ENCODE measurements at regions of chr5 and their contacts with region 1.

Region 1: GRCh38 chr5:150161242-150162141 is 5.1 kb upstream of the CDX1 start:
- DNase-seq: peak; percentile 87 to 90
- H3K4me3 ChIP-seq: no peak overlapping the region
- H3K27ac ChIP-seq: peak overlapping the region in 3 of 5 donors; percentile 66 to 84 (median 81)
- H3K4me1 ChIP-seq: peaks cover under 1 to 27% (median 15%) of the 10 kb centered on the region in 4 donors
- H3K27me3 ChIP-seq: peaks cover 0 to 10% (median 3%) of the 10 kb centered on the region in 3 donors
- CTCF ChIP-seq: peak in 6 of 7 experiments; percentile 69 to 96 (median 94)
- EP300 ChIP-seq: no peak
- POLR2A ChIP-seq: no peak

Region 2: DNA sequence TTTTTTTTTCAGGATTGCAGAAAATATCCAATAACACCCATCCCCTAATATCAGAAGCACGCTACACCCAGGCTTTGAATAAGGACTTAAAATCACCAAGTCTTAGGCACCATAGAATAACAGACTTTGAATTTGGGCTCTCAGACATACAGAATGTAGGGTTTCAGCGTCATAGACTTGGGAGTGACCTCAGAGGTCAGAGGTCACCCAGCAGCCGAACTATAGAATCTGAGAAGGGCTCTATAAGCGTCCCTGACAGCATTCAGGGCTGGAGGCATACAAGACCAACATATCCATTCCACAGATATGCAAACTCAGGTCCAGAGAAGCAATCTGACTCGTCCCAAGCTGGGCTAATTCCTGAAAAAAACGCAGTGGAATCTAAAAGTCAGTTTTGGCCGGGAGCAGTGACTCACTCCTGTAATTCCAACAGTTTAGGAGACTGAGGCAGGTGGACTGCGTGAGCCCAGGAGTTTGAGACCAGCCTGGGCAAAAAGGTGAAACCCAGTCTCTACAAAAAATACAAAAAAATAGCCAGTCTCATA is 63.1 kb after region 1 on chr5:
- intact Hi-C with region 1: loop called (anchors 5 kb)
- DNase-seq: no peak
- H3K4me3 ChIP-seq: no peak overlapping the region
- H3K27ac ChIP-seq: no peak overlapping the region
- H3K4me1 ChIP-seq: no peaks in the 10 kb centered on the region
- H3K27me3 ChIP-seq: peaks cover 0 to 9% (median 0%) of the 10 kb centered on the region in 3 donors
- CTCF ChIP-seq: no peak
- EP300 ChIP-seq: no peak
- POLR2A ChIP-seq: no peak

Region 3: DNA sequence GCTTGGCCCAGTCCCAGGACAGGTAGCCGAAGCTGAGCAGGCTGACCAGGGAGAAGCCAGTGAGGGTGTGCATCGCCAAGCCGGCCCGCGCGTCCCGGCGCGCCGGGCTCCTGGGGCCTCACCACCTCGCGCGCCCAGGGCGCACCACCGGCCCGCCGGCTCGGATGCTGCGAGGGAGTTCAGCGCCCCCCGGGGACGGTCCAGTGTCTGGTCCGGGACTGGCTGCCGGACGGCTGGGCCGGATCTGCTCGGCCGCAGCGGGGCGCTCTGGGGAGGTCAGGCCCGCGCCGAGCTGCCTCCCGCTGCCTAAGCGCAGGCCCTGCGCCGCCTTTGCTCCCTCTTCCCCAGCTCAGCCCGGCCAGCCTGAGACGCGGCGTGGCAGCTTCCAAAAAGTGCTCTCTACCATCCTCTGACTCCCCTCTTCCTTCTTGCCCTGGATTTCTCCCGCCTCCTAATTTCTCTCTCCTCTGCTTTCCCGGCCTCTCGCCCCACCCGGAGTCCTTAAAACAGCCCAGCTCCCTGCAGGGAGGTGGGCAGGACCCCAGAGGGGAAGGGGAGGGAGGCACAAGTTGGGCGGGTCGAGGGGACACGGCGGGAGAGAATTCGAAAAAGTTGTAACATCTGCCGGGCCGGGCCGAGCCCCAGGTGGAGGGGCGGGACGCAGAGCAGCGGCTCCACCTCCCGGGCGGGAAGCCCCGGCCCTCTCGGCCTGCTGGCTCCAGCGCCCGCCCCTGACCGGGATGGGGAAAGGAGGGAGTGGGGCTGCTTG is 141.0 kb after region 1 on chr5 and contains the start of gene ARSI:
- intact Hi-C with region 1: no loop called
- DNase-seq: peak in 1 of 2 donors; percentile 91
- H3K4me3 ChIP-seq: peak within 1 kb of the TSS; percentile 39 to 40 (median 40)
- H3K27ac ChIP-seq: peak within 1 kb of the TSS; percentile 28 to 80 (median 60)
- H3K4me1 ChIP-seq: peaks cover 14 to 72% (median 28%) of the 10 kb centered on the region in 4 donors
- H3K27me3 ChIP-seq: peaks cover 0 to 40% (median 17%) of the 10 kb centered on the region in 3 donors
- CTCF ChIP-seq: no peak
- EP300 ChIP-seq: no peak
- POLR2A ChIP-seq: no peak
- total RNA-seq, gene ARSI: 1.7 to 7.0 (median 2.3) TPM in 3 of 5 donors, not detected in the others

Region 4: DNA sequence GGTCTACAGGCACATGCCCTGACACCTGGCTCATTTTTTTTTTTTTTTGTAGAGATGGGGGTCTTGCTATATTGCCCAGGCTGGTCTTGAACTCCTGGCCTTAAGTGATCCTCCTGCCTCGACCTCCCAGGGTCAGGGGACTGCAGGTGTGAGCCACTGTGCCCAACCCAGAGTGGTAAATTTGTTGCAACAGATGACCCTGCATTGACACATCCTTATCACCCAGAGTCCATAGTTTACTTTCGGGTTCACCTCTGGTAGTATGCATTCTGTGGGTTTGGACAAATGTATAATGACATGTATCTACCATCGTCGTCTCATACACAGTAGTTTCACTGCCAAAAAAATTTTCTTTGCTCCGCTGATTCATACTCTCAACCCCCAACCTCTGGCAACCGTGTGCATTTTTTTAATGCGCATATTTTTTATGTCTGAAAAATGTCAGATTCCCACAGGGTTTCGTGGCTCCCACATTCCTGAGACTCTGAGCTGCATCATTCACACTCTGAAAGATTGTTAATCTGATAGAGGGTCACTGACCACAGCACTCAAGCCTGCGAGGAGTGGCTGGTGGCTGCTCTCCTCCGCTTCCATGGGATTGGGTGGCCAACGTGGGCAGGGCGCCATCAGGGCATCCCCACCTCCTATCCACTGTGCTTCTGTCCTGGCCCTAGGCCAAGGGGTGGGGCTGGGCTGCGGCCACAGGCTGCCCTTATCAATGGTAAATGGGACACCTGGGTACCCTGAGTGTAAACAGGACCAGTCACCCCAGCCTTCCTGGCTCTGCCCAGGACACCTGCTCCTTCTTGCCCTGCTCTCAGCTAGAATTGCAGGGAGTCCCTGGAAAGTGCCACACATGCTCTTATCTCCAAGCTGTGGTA is 356.0 kb after region 1 on chr5:
- intact Hi-C with region 1: no loop called
- DNase-seq: peak; percentile 83 to 86
- H3K4me3 ChIP-seq: no peak overlapping the region
- H3K27ac ChIP-seq: peak overlapping the region; percentile 61 to 87 (median 82)
- H3K4me1 ChIP-seq: peaks cover 71 to 97% (median 84%) of the 10 kb centered on the region in 4 donors
- H3K27me3 ChIP-seq: no peaks in the 10 kb centered on the region
- CTCF ChIP-seq: no peak
- EP300 ChIP-seq: no peak
- POLR2A ChIP-seq: no peak

Region 5: GRCh38 chr5:150637245-150638052 is 476.0 kb after region 1 on chr5:
- intact Hi-C with region 1: no loop called
- DNase-seq: peak; percentile 63 to 87
- H3K4me3 ChIP-seq: no peak overlapping the region
- H3K27ac ChIP-seq: peak overlapping the region; percentile 71 to 90 (median 86)
- H3K4me1 ChIP-seq: peaks cover 62 to 91% (median 80%) of the 10 kb centered on the region in 4 donors
- H3K27me3 ChIP-seq: no peaks in the 10 kb centered on the region
- CTCF ChIP-seq: no peak
- EP300 ChIP-seq: no peak
- POLR2A ChIP-seq: no peak

Measured in stomach (tissue), 19 donors.